Dorsolateral prefrontal cortex (tissue), 120 donors: ENCODE measurements at regions of chr9 and their contacts with region 1.

Region 1: DNA sequence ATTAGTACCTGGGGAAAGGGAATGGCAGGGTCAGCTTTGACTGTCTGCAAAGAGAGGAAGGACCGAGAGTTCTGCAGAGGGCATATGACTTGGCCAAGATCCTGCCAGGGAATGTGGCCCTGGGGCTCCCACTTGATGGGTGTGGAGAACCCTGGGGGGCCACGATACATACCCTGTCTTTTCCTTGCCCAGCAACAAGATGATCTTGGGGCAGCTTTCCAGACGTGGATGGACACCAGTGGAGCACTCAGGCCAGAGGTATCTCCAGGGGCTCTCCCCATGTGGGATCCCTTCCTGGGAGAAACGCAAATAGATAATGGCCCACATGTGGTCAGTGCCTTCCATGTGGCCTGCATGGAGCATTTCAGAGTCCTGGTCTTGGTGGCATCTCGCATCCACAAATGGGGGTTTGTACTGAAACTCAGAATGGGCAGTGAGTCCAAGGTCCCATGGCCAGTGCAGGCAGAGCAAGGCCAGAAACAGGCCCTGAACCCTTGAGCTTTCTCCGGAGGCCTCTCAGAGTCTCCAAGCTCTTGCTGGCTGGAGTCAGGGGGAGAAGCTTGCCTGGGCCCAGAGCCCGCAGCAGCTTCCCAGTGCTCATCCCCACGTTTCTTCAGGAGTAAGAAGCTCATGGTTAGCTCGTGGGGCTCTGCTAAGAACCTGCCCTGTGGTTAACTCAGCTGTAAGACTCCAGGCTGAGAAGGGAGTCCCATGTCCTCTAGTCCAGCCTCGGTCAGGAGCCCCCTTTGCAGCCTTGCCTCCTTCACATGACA is 18.3 kb upstream of the ORM1 start:
- DNase-seq: peak in 4 of 10 donors; percentile 4 to 24 (median 12)
- H3K4me3 ChIP-seq: no peak overlapping the region
- H3K27ac ChIP-seq: no peak overlapping the region
- H3K27me3 ChIP-seq: no peaks in the 10 kb centered on the region
- CTCF ChIP-seq: no peak

Region 2: DNA sequence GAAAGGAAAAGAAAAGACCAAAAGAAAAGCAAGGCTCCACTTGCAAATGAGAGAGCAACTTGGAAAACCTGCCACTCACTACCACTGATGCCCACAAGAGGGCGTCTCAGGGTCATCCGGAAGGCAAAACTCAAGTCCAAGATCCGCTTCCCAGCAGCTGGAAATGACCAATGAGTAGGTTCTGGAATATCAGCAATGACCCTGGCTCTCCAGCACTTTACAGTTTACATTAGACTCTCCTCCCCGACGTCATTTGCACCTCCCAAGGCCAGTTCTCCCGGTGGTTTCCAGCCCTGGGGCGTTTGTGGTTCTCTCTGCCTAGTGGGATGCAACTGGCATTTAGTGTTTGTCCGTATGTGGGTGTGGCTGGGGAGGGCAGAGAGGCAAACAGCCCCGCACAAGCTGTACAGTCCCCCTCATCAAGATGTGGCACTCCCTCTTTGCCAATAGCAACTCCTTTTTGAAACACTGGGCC is 622.3 kb before region 1 on chr9:
- intact Hi-C with region 1: loop called in 1 of 2 experiments (anchors 2 kb)
- DNase-seq: peak in 9 of 10 donors; percentile 45 to 83 (median 71)
- H3K4me3 ChIP-seq: no peak overlapping the region
- H3K27ac ChIP-seq: no peak overlapping the region
- H3K27me3 ChIP-seq: peaks cover 0 to 12% (median under 1%) of the 10 kb centered on the region in 45 donors
- CTCF ChIP-seq: peak; percentile 83 to 98 (median 92)

Region 3: GRCh38 chr9:114082017-114082762 is 222.4 kb before region 1 on chr9:
- intact Hi-C with region 1: loop called in 1 of 2 experiments (anchors 1 kb)
- DNase-seq: peak; percentile 81 to 97 (median 90)
- H3K4me3 ChIP-seq: no peak overlapping the region
- H3K27ac ChIP-seq: no peak overlapping the region
- H3K27me3 ChIP-seq: peaks cover 0 to 21% (median under 1%) of the 10 kb centered on the region in 45 donors
- CTCF ChIP-seq: peak; percentile 81 to 99 (median 95)

Region 4: GRCh38 chr9:114348906-114349482 is 44.4 kb after region 1 on chr9:
- intact Hi-C with region 1: no loop called
- DNase-seq: peak in 7 of 10 donors; percentile 39 to 81 (median 68)
- H3K4me3 ChIP-seq: no peak overlapping the region
- H3K27ac ChIP-seq: peak overlapping the region in 48 of 59 donors; percentile 24 to 92 (median 78)
- H3K27me3 ChIP-seq: no peaks in the 10 kb centered on the region
- CTCF ChIP-seq: no peak